Mammary epithelial cell (primary cell): ENCODE measurements at regions of chr15 and their contacts with region 1.

Region 1: DNA sequence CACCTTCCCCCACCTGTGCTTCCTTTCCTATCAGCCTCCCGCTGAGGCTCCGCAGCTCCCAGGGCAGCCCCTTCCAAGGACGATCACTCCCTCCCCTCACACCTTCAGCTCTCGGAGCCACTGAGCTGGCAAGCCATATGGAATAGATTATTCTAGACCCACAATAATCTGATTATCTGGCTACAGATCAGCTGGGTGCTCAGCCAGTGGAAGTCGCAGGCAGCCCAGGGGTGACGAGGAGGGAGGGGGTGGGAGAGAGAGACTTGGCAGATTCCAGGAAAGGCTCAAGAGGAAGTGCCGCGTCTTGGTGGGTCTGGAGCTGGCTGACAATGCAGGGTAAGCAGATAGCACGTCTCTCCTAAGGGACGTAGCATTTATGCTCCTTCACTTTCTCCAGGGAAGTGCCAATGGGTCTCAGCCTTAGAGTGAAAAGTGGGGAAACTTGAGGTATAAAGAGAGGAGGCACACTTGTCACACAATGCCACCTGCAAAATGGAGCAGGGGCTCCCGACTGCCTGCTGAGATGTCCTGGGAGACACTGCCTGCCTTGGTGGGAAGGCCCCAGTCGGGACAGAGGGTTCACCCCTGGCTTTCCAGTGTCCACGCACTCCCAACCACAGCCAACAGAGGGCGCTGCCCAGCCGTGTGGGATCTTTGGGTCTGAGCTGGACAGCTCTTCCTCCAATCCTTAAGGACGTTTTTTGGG is 9.4 kb upstream of the MESP1 start:
- DNase-seq: peak; percentile 68
- H3K4me3 ChIP-seq: no peak overlapping the region
- H3K27ac ChIP-seq: no peak overlapping the region
- H3K4me1 ChIP-seq: peaks cover 16% of the 10 kb centered on the region
- H3K27me3 ChIP-seq: no peaks in the 10 kb centered on the region
- CTCF ChIP-seq: peak; percentile 92 to 99

Region 2: DNA sequence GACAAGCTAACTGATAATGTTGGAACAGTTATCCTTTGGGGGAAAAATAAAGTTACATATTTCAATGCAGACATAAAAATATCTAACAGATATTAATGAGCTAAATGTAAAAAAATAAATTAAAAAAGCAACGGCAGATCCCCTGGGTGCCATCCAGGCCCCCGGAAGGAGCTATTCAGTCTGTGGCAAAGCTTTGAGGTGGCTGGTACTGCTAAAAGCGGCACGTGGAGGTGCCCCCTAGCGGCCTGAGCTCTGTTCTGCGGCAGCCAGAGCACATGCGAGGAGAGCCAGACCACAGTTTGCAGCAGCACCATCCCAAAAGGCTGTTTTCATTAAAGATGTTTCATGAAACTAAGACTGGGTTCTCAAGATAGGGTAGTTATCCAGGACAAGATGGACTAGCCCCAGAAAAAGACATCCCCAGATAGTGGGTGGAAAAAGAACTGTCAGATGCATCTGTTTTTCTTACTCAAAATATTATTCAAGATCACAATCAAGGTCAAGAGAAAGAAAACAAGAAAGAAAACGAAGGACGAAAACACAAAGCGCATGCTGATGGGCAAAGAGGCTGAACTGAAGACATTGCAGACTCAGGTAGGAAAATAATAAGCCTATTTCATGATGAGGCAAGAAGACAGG is 114.6 kb after region 1 on chr15:
- CTCF ChIA-PET with region 1: interaction called, 42 read pairs
- dilution Hi-C with region 1: loop called (anchors 5 kb)
- in situ Hi-C with region 1: loop called (anchors 5 kb)
- intact Hi-C with region 1: loop called (anchors 1 kb)
- DNase-seq: peak; percentile 50
- H3K4me3 ChIP-seq: no peak overlapping the region
- H3K27ac ChIP-seq: no peak overlapping the region
- H3K4me1 ChIP-seq: no peaks in the 10 kb centered on the region
- H3K27me3 ChIP-seq: no peaks in the 10 kb centered on the region
- CTCF ChIP-seq: peak; percentile 90 to 98

Region 3: GRCh38 chr15:89888214-89888804 is 127.9 kb after region 1 on chr15:
- CTCF ChIA-PET with region 1: interaction called, 4 read pairs
- dilution Hi-C with region 1: no loop called
- in situ Hi-C with region 1: no loop called
- intact Hi-C with region 1: loop called (anchors 1 kb)
- DNase-seq: peak; percentile 44
- H3K4me3 ChIP-seq: no peak overlapping the region
- H3K27ac ChIP-seq: no peak overlapping the region
- H3K4me1 ChIP-seq: peaks cover 6% of the 10 kb centered on the region
- H3K27me3 ChIP-seq: no peaks in the 10 kb centered on the region
- CTCF ChIP-seq: peak; percentile 49 to 55